Naive thymus-derived CD4-positive, alpha-beta T cell (primary cell): ENCODE measurements at regions of chr17 and their contacts with region 1.

Region 1: GRCh38 chr17:68172461-68172954 is 75.3 kb upstream of the AMZ2 start:
- DNase-seq: peak; percentile 45 to 74 (median 67)
- ATAC-seq: peak; percentile 92
- H3K4me3 ChIP-seq: no peak overlapping the region
- H3K4me3 Mint-ChIP-seq: no peak overlapping the region
- H3K27ac ChIP-seq: no peak overlapping the region
- H3K27ac Mint-ChIP-seq: no peak overlapping the region
- H3K4me1 ChIP-seq: peaks cover 0 to 7% of the 10 kb centered on the region in 2 donors
- H3K4me1 Mint-ChIP-seq: peaks cover 14 to 38% (median 20%) of the 10 kb centered on the region in 7 donors
- H3K27me3 ChIP-seq: no peaks in the 10 kb centered on the region
- H3K27me3 Mint-ChIP-seq: peaks cover 0 to 1% (median 0%) of the 10 kb centered on the region in 5 donors

Region 2: GRCh38 chr17:68468334-68468733 is 295.8 kb after region 1 on chr17:
- CTCF ChIA-PET with region 1: interaction called, 17 read pairs
- POLR2A ChIA-PET with region 1: no interaction called
- intact Hi-C with region 1: loop called (anchors 1 kb)
- DNase-seq: no peak
- ATAC-seq: no peak
- H3K4me3 ChIP-seq: no peak overlapping the region
- H3K4me3 Mint-ChIP-seq: no peak overlapping the region
- H3K27ac ChIP-seq: no peak overlapping the region
- H3K27ac Mint-ChIP-seq: no peak overlapping the region
- H3K4me1 ChIP-seq: no peaks in the 10 kb centered on the region
- H3K4me1 Mint-ChIP-seq: peaks cover 0 to 9% (median 0%) of the 10 kb centered on the region in 7 donors
- H3K27me3 ChIP-seq: no peaks in the 10 kb centered on the region
- H3K27me3 Mint-ChIP-seq: peaks cover 0 to 38% (median 6%) of the 10 kb centered on the region in 5 donors

Region 3: GRCh38 chr17:68497885-68498319 is 325.4 kb after region 1 on chr17:
- CTCF ChIA-PET with region 1: no interaction called
- POLR2A ChIA-PET with region 1: no interaction called
- intact Hi-C with region 1: no loop called
- DNase-seq: no peak
- ATAC-seq: peak; percentile 50
- H3K4me3 ChIP-seq: no peak overlapping the region
- H3K4me3 Mint-ChIP-seq: peak overlapping the region in 2 of 10 donors; percentile 10 to 60
- H3K27ac ChIP-seq: no peak overlapping the region
- H3K27ac Mint-ChIP-seq: peak overlapping the region in 1 of 9 donors; percentile 84
- H3K4me1 ChIP-seq: no peaks in the 10 kb centered on the region
- H3K4me1 Mint-ChIP-seq: peaks cover 10 to 36% (median 14%) of the 10 kb centered on the region in 7 donors
- H3K27me3 ChIP-seq: no peaks in the 10 kb centered on the region
- H3K27me3 Mint-ChIP-seq: peaks cover 0 to 4% (median 0%) of the 10 kb centered on the region in 5 donors